ENCODE measurements at regions of chr12 and their contacts with region 1.

Region 1: GRCh38 chr12:92987362-92987761 is 58.3 kb upstream of the EEA1 start:
- DNase-seq: peak; percentile 61 to 71
- ATAC-seq: peak; percentile 88 to 92; a peak in 5 of 6 replicates
- H3K4me3 ChIP-seq: no peak overlapping the region
- H3K27ac ChIP-seq: peak overlapping the region; percentile 6 to 37; a peak in 3 of 6 replicates
- H3K4me1 ChIP-seq: peaks cover 6% of the 10 kb centered on the region; the same call in 2 of the 3 replicates
- CTCF ChIP-seq: peak; percentile 74
- EP300 ChIP-seq: no peak
- POLR2A ChIP-seq: no peak
- RAD21 ChIP-seq: peak; percentile 88 to 90

Region 2: GRCh38 chr12:92389466-92389865 is 597.9 kb before region 1 on chr12:
- CTCF ChIA-PET with region 1: no interaction called
- POLR2A ChIA-PET with region 1: no interaction called
- DNase-seq: no peak
- ATAC-seq: no peak
- H3K4me3 ChIP-seq: no peak overlapping the region
- H3K27ac ChIP-seq: no peak overlapping the region
- H3K4me1 ChIP-seq: no peaks in the 10 kb centered on the region
- CTCF ChIP-seq: no peak
- EP300 ChIP-seq: no peak
- POLR2A ChIP-seq: no peak
- RAD21 ChIP-seq: no peak

Region 3: GRCh38 chr12:92827836-92828431 is 159.4 kb before region 1 on chr12:
- CTCF ChIA-PET with region 1: interaction called, 18 read pairs
- POLR2A ChIA-PET with region 1: no interaction called
- DNase-seq: peak; percentile 36 to 74
- ATAC-seq: peak; percentile 62 to 84; a peak in 4 of 6 replicates
- H3K4me3 ChIP-seq: no peak overlapping the region
- H3K27ac ChIP-seq: no peak overlapping the region
- H3K4me1 ChIP-seq: peaks cover 3% of the 10 kb centered on the region; the same call in 2 of the 3 replicates
- CTCF ChIP-seq: peak; percentile 87
- EP300 ChIP-seq: no peak
- POLR2A ChIP-seq: no peak
- RAD21 ChIP-seq: peak; percentile 83 to 90

Region 4: GRCh38 chr12:92973601-92974000 is 13.8 kb before region 1 on chr12:
- CTCF ChIA-PET with region 1: interaction called, 71 read pairs
- POLR2A ChIA-PET with region 1: interaction called, 3 read pairs
- DNase-seq: peak in 1 of 2 experiments; percentile 62
- ATAC-seq: no peak
- H3K4me3 ChIP-seq: no peak overlapping the region
- H3K27ac ChIP-seq: peak overlapping the region; percentile 74 to 83; a peak in 5 of 6 replicates
- H3K4me1 ChIP-seq: peaks cover 38% of the 10 kb centered on the region
- CTCF ChIP-seq: no peak
- EP300 ChIP-seq: no peak
- POLR2A ChIP-seq: no peak
- RAD21 ChIP-seq: no peak

Region 5: GRCh38 chr12:93019975-93020630 is 32.7 kb after region 1 on chr12:
- CTCF ChIA-PET with region 1: interaction called, 13 read pairs
- POLR2A ChIA-PET with region 1: no interaction called
- DNase-seq: no peak
- ATAC-seq: peak in 1 of 2 experiments; percentile 27; a peak in 2 of 6 replicates
- H3K4me3 ChIP-seq: no peak overlapping the region
- H3K27ac ChIP-seq: no peak overlapping the region
- H3K4me1 ChIP-seq: no peaks in the 10 kb centered on the region
- CTCF ChIP-seq: no peak
- EP300 ChIP-seq: no peak
- POLR2A ChIP-seq: no peak
- RAD21 ChIP-seq: no peak

Region 6: DNA sequence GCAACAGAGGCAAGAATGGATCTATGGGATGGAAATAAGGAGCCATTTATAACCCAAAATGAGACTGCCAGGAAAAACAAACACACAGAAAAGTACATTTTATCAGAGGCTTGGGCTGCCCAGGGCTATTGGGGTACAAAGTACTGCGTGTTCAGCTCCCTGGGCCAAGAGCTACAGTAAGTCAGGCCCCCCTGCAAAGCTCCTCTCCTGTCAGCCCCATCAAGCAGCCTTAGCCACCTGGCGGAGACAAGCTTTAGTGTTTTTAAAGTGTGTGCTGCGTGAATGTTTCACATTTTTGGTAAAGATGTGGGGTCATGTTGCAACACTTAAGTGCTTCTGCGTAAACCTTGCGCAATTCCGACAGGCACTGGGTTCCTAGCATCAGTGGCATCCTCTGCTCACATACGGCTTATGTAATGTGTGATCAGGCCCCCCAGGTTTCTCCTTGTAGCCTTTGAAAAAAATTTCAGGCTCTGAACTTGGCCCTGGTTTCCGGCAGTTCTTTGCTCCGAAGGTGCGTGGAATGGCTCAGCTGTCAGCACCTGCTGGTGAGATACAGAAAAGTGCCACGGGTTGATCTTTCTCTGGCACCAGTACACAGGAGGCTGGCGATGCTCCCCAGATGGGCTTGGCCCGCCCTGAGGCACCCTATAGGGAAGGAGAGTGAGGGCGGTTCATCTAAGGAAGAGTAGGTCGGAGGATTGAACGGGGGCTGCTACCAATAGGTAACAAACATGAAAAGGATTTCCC is 140.4 kb after region 1 on chr12:
- CTCF ChIA-PET with region 1: no interaction called
- POLR2A ChIA-PET with region 1: no interaction called
- DNase-seq: peak in 1 of 2 experiments; percentile 15
- ATAC-seq: peak in 1 of 2 experiments; percentile 56; a peak in 3 of 6 replicates
- H3K4me3 ChIP-seq: no peak overlapping the region
- H3K27ac ChIP-seq: no peak overlapping the region; a peak in 1 of 6 replicates
- H3K4me1 ChIP-seq: peaks cover 12% of the 10 kb centered on the region; the same call in 2 of the 3 replicates
- CTCF ChIP-seq: no peak
- EP300 ChIP-seq: no peak
- POLR2A ChIP-seq: no peak
- RAD21 ChIP-seq: no peak

Region 7: GRCh38 chr12:93387780-93388179 is 400.4 kb after region 1 on chr12:
- CTCF ChIA-PET with region 1: interaction called, 67 read pairs
- POLR2A ChIA-PET with region 1: no interaction called
- DNase-seq: no peak
- ATAC-seq: no peak
- H3K4me3 ChIP-seq: no peak overlapping the region
- H3K27ac ChIP-seq: no peak overlapping the region
- H3K4me1 ChIP-seq: 0 out of 3 replicates have a peak, but pooled peaks cover 7% of the 10 kb centered on the region
- CTCF ChIP-seq: no peak
- EP300 ChIP-seq: no peak
- POLR2A ChIP-seq: no peak
- RAD21 ChIP-seq: no peak

Region 8: GRCh38 chr12:93413064-93413463 is 425.7 kb after region 1 on chr12:
- CTCF ChIA-PET with region 1: interaction called, 14 read pairs
- POLR2A ChIA-PET with region 1: no interaction called
- DNase-seq: no peak
- ATAC-seq: no peak; a peak in 1 of 6 replicates
- H3K4me3 ChIP-seq: no peak overlapping the region
- H3K27ac ChIP-seq: no peak overlapping the region
- H3K4me1 ChIP-seq: no peaks in the 10 kb centered on the region
- CTCF ChIP-seq: no peak
- EP300 ChIP-seq: no peak
- POLR2A ChIP-seq: no peak
- RAD21 ChIP-seq: no peak

Measured in A549 (cell line).